ENCODE measurements at regions of chr12 and their contacts with region 1.

Region 1: GRCh38 chr12:49170924-49171323 is 18.0 kb downstream of the TUBA1A start:
- DNase-seq: no peak
- H3K4me3 ChIP-seq: no peak overlapping the region
- CTCF ChIP-seq: no peak
- POLR2A ChIP-seq: no peak

Region 2: DNA sequence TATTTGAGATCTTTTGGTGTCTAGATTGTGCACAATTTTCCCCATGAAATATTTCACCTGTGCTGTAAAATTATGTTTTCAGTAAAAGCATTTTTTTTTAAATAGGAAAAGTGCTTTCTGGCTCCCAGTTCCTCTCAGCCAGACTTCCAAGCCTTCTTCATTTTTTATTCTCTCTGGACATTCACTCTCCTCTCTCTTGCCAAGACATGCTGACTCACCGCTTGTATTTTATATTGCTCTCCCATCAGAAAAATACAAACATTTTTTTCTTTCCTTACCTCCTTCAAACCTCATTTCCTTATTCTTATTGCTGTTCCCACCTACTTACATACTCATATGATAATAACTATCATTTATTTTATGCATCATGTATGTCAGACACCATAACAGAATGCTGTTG is 782.5 kb before region 1 on chr12:
- intact Hi-C with region 1: loop called (anchors 10 kb)
- DNase-seq: no peak
- H3K4me3 ChIP-seq: no peak overlapping the region
- CTCF ChIP-seq: no peak
- POLR2A ChIP-seq: no peak

Region 3: GRCh38 chr12:49451468-49452259 is 280.7 kb after region 1 on chr12:
- intact Hi-C with region 1: no loop called
- DNase-seq: no peak
- H3K4me3 ChIP-seq: no peak overlapping the region
- CTCF ChIP-seq: no peak
- POLR2A ChIP-seq: no peak